HEK293T (cell line): ENCODE measurements at regions of chr7 and their contacts with region 1.

Region 1: DNA sequence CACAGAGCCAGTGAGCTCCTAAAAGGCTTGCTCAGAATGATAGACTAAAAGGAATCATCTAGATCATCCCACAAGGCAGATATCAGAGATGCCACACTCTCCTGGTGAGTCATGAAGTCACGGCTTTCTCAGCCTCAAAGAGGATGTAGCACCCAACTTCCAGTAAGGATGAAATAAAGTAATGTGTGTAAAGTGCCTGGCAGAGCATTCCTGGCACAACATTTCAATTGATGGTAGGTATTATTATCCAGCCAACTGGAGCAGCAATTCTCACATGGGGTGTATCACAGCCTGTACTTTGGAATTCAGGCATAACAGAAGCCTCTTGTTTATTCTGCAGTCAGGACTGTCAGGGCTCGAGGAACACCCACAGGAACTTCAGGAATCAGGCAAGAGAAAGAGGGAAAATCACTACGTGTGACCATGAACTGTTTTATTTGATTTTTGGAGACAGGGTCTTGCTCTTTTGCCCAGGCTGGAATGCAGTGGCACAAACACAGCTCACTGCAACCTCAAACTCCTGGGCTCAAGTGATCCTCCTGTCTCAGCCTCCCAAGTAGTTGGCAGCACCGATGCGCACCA is 5.3 kb upstream of the NAT16 start:
- DNase-seq: no peak

Region 2: GRCh38 chr7:101169838-101170551 is 15.4 kb before region 1 on chr7:
- CTCF ChIA-PET with region 1: interaction called, 3 read pairs
- POLR2A ChIA-PET with region 1: interaction called, 16 read pairs
- DNase-seq: peak; percentile 70

Region 3: GRCh38 chr7:101235050-101235449 is 49.7 kb after region 1 on chr7:
- CTCF ChIA-PET with region 1: no interaction called
- POLR2A ChIA-PET with region 1: no interaction called
- DNase-seq: no peak

Region 4: GRCh38 chr7:101688183-101688831 is 503.0 kb after region 1 on chr7:
- CTCF ChIA-PET with region 1: no interaction called
- POLR2A ChIA-PET with region 1: no interaction called
- DNase-seq: peak; percentile 88